Endothelial cell of umbilical vein (primary cell): ENCODE measurements at regions of chr21 and their contacts with region 1.

Region 1: DNA sequence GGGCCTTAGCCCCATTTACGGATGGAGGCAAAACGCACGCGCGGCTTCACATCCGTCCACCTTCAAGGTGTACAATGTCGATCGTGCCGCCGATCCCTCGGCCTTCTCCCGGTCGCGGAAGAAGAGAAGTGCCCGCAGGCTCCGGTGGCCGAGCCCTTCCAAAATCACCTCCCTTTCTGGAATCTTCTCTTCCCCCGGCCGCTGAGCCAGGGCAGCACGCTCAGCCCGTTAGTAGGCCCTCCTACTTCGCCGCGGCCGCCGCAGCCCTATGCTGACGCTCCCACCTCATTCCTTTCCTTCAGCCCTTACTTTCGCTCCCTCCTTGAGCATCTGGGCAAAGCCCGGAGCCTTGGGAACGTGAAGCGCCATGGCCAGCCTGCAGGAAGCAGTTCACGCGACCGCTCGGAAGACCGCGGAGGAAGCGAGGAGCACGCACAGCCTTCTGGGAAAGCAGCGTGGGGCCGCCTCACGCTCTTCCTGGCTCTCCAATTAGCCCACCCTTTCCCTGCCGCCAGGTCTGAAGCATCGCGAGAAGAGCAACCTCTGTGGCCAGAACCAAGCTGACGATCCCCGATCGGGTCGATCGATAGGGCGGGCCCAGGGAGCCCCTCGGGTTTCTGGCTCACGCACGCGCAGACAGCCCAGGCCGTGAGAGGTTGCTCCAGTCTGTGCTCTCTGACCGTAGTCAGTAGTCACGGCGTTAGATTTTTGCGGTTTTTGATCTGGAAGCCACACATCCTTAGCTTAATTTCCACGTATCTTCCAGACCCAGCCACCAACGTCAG is at the start of gene CCT8:
- DNase-seq: peak; percentile 99
- H3K4me3 ChIP-seq: peak within 1 kb of the TSS; percentile 35 to 100 (median 95)
- H3K27ac ChIP-seq: peak within 1 kb of the TSS; percentile 68
- H3K4me1 ChIP-seq: peaks cover 24% of the 10 kb centered on the region
- H3K27me3 ChIP-seq: no peaks in the 10 kb centered on the region
- CTCF ChIP-seq: no peak
- POLR2A ChIP-seq: peak; percentile 96
- total RNA-seq, gene CCT8: 212 and 213 TPM in 2 replicates

Region 2: DNA sequence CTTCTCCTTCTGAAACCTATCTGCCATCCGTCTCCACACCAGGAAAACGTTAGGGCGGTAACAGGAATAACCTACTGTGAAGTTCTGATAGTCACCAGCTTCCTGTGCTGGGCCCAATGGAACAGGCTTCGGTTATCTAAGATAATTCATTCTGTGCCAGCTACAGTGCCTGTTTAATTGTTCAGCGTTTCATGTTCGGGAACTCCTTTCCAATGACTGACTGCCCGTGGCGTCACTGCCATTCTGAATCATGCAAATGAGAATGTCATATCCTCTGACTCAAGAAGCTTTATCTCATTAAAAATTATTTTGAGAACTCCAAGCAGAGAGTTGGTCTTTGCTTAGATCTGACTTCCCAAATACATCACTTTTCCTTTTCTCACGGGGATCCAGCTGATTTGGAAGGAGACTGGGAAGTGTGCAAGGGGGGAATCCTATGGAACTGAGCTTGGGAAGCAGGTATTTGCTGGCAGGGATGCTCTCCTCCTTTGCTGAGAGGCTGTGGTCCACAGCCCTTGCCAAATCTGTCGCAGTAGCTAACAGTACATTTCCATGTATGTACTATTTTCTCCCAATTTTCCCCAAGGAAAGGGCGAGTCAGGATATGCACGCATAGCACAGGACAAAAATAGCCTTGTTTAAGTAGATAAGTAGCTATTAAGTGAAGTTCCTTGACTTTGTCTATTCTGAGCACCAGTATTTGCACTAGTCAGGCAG is 439.4 kb before region 1 on chr21:
- CTCF ChIA-PET with region 1: no interaction called
- POLR2A ChIA-PET with region 1: no interaction called
- dilution Hi-C with region 1: no loop called
- intact Hi-C with region 1: loop called (anchors 5 kb)
- DNase-seq: peak; percentile 94
- H3K4me3 ChIP-seq: peak overlapping the region in 1 of 3 experiments; percentile 1
- H3K27ac ChIP-seq: peak overlapping the region; percentile 97
- H3K4me1 ChIP-seq: peaks cover 59% of the 10 kb centered on the region
- H3K27me3 ChIP-seq: no peaks in the 10 kb centered on the region
- CTCF ChIP-seq: no peak
- POLR2A ChIP-seq: peak; percentile 12

Region 3: DNA sequence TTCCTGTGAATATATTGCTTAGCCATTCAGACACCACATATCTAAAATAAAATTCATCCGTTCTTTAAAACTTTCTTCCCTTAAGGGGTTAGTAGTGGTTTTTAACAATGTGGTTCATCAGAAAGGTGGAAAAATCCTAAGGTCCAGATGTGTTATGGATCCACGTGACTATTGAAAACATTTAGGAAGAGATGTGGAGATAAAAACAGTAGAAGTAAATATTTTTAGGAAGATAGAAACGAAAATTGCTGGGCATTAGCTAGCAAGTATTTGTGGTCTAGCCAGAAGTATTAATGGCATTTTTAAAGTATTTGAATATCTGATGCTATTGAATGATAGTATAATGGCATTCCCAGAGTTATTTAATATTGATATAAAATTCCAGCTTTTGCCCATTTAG is 261.6 kb before region 1 on chr21:
- CTCF ChIA-PET with region 1: no interaction called
- POLR2A ChIA-PET with region 1: no interaction called
- dilution Hi-C with region 1: no loop called
- intact Hi-C with region 1: no loop called
- DNase-seq: no peak
- H3K4me3 ChIP-seq: no peak overlapping the region
- H3K27ac ChIP-seq: no peak overlapping the region
- H3K4me1 ChIP-seq: no peaks in the 10 kb centered on the region
- H3K27me3 ChIP-seq: no peaks in the 10 kb centered on the region
- CTCF ChIP-seq: no peak
- POLR2A ChIP-seq: no peak

Region 4: GRCh38 chr21:28992526-28993292 is 80.7 kb before region 1 on chr21 and contains the start of gene LTN1:
- CTCF ChIA-PET with region 1: no interaction called
- POLR2A ChIA-PET with region 1: no interaction called
- dilution Hi-C with region 1: no loop called
- intact Hi-C with region 1: loop called (anchors 2 kb)
- DNase-seq: peak; percentile 100
- H3K4me3 ChIP-seq: peak within 1 kb of the TSS; percentile 71 to 89 (median 80)
- H3K27ac ChIP-seq: peak within 1 kb of the TSS; percentile 52
- H3K4me1 ChIP-seq: peaks cover 13% of the 10 kb centered on the region
- H3K27me3 ChIP-seq: no peaks in the 10 kb centered on the region
- CTCF ChIP-seq: no peak
- POLR2A ChIP-seq: peak; percentile 77
- total RNA-seq, gene LTN1: 21.5 and 23.0 TPM in 2 replicates

Region 5: GRCh38 chr21:29002442-29003144 is 70.8 kb before region 1 on chr21:
- CTCF ChIA-PET with region 1: no interaction called
- POLR2A ChIA-PET with region 1: interaction called, 4 read pairs
- dilution Hi-C with region 1: no loop called
- intact Hi-C with region 1: loop called (anchors 2 kb)
- DNase-seq: peak; percentile 97
- H3K4me3 ChIP-seq: peak overlapping the region; percentile 50 to 89 (median 64)
- H3K27ac ChIP-seq: peak overlapping the region; percentile 86
- H3K4me1 ChIP-seq: peaks cover 8% of the 10 kb centered on the region
- H3K27me3 ChIP-seq: no peaks in the 10 kb centered on the region
- CTCF ChIP-seq: no peak
- POLR2A ChIP-seq: peak; percentile 99

Region 6: GRCh38 chr21:29024474-29025327 is 48.7 kb before region 1 on chr21 and contains the start of gene USP16:
- CTCF ChIA-PET with region 1: interaction called, 3 read pairs
- POLR2A ChIA-PET with region 1: interaction called, 3 read pairs
- dilution Hi-C with region 1: no loop called
- intact Hi-C with region 1: loop called (anchors 1 kb)
- DNase-seq: peak; percentile 100
- H3K4me3 ChIP-seq: peak within 1 kb of the TSS; percentile 33 to 80 (median 66)
- H3K27ac ChIP-seq: peak within 1 kb of the TSS; percentile 88
- H3K4me1 ChIP-seq: peaks cover 8% of the 10 kb centered on the region
- H3K27me3 ChIP-seq: no peaks in the 10 kb centered on the region
- CTCF ChIP-seq: no peak
- POLR2A ChIP-seq: peak; percentile 62
- total RNA-seq, gene USP16: 29.3 and 31.3 TPM in 2 replicates

Region 7: DNA sequence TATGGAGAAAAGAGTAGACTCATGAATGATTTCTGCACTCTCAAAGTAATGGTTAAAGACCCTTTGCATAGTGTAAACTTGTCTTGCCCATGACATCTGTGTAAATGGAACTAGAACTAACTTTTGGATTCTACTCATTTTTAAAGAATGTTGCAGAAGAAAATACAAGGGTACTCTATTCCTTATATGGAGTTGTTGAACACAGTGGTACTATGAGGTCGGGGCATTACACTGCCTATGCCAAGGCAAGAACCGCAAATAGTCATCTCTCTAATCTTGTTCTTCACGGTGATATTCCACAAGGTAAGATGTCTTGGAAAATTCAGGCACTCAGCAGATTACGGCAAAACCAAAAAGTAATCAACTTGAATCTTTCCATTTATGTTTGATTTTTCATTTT is 19.8 kb before region 1 on chr21:
- CTCF ChIA-PET with region 1: interaction called, 3 read pairs
- POLR2A ChIA-PET with region 1: no interaction called
- dilution Hi-C with region 1: no loop called
- intact Hi-C with region 1: loop called (anchors 2 kb)
- DNase-seq: no peak
- H3K4me3 ChIP-seq: no peak overlapping the region
- H3K27ac ChIP-seq: no peak overlapping the region
- H3K4me1 ChIP-seq: no peaks in the 10 kb centered on the region
- H3K27me3 ChIP-seq: no peaks in the 10 kb centered on the region
- CTCF ChIP-seq: no peak
- POLR2A ChIP-seq: no peak